ENCODE measurements at regions of chr21 and their contacts with region 1.

Region 1: GRCh38 chr21:42062236-42063022 is 8.7 kb upstream of the UMODL1 start:
- DNase-seq: peak; percentile 83 to 97 (median 90)
- ATAC-seq: peak; percentile 84
- H3K4me3 ChIP-seq: peak overlapping the region; percentile 79
- H3K4me3 Mint-ChIP-seq: peak overlapping the region; percentile 81
- H3K27ac ChIP-seq: peak overlapping the region; percentile 89 to 93
- H3K27ac Mint-ChIP-seq: peak overlapping the region; percentile 98
- H3K4me1 ChIP-seq: peaks cover 56% of the 10 kb centered on the region
- H3K4me1 Mint-ChIP-seq: peaks cover 63% of the 10 kb centered on the region
- H3K27me3 ChIP-seq: no peaks in the 10 kb centered on the region
- H3K27me3 Mint-ChIP-seq: no peaks in the 10 kb centered on the region
- CTCF ChIP-seq: no peak

Region 2: DNA sequence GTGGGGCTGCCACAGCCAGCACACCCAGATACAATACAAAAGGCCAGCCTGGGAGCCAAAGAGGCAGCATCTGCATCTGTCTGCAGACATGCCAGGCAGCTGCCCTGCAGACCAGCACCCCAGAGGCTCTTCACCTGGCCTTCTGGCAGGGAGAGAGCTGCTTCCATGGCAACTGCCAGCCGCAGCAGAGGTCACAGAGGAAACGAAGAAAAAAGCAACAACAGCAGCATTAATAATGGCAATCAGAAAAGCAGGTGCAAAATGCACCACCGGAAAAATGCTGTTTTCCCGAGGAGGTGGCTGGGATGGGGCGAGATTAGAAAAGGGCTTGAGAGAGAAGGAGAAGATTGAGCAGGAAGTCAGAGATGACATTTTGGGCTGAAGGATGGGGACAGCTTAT is 1885.7 kb before region 1 on chr21:
- CTCF ChIA-PET with region 1: no interaction called
- POLR2A ChIA-PET with region 1: no interaction called
- intact Hi-C with region 1: no loop called
- DNase-seq: no peak
- ATAC-seq: no peak
- H3K4me3 ChIP-seq: no peak overlapping the region
- H3K4me3 Mint-ChIP-seq: no peak overlapping the region
- H3K27ac ChIP-seq: no peak overlapping the region
- H3K27ac Mint-ChIP-seq: no peak overlapping the region
- H3K4me1 ChIP-seq: no peaks in the 10 kb centered on the region
- H3K4me1 Mint-ChIP-seq: no peaks in the 10 kb centered on the region
- H3K27me3 ChIP-seq: no peaks in the 10 kb centered on the region
- H3K27me3 Mint-ChIP-seq: peaks cover 6% of the 10 kb centered on the region
- CTCF ChIP-seq: no peak

Region 3: GRCh38 chr21:41267346-41267745 is 795.1 kb before region 1 on chr21:
- CTCF ChIA-PET with region 1: no interaction called
- POLR2A ChIA-PET with region 1: no interaction called
- intact Hi-C with region 1: no loop called
- DNase-seq: no peak
- ATAC-seq: no peak
- H3K4me3 ChIP-seq: no peak overlapping the region
- H3K4me3 Mint-ChIP-seq: no peak overlapping the region
- H3K27ac ChIP-seq: no peak overlapping the region
- H3K27ac Mint-ChIP-seq: no peak overlapping the region
- H3K4me1 ChIP-seq: no peaks in the 10 kb centered on the region
- H3K4me1 Mint-ChIP-seq: no peaks in the 10 kb centered on the region
- H3K27me3 ChIP-seq: no peaks in the 10 kb centered on the region
- H3K27me3 Mint-ChIP-seq: peaks cover 26% of the 10 kb centered on the region
- CTCF ChIP-seq: no peak

Region 4: DNA sequence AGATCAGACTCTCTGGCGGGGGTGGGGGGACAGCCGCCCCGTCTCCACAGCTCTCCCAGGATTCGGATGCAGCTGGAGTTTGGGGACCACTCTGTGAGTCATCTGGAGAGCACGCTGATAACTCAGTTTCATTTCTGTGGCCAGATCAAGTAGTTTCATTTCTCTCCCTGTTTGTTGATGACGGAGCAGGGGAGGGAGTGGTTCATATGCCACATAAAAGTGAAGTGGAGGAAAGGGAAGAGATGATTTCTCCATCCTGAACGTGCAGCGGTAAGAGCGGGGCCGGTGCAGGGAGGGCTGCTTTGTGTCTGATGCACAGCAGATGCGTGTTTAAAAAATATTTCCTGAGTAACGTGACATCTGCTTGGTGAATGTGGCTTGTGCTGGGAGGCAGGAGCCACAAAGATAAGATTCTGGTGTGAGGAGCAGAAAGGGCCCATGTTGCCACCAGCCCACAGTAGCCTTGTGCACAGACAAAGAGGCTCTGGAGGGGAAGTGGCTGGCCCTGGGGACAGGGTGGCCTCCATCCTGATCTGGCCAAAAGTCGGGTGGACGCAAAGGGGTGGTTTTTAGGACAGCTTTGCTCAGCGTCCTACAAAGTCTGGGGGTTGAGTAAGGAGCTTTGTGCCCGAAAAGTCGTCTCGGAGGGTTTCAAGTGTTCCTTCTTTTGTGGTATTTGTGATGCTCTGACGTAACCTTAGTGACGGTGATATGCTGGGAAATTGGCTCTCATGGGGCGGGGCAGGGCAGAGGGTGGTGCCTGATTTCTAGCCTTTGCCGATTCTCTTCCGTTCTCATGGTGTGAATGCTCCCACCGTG is 700.4 kb before region 1 on chr21 and contains the start of gene MX2:
- CTCF ChIA-PET with region 1: no interaction called
- POLR2A ChIA-PET with region 1: no interaction called
- intact Hi-C with region 1: loop called in 1 of 2 experiments (anchors 5 kb)
- DNase-seq: peak; percentile 67 to 96 (median 81)
- ATAC-seq: peak; percentile 79
- H3K4me3 ChIP-seq: peak within 1 kb of the TSS; percentile 89
- H3K4me3 Mint-ChIP-seq: peak within 1 kb of the TSS; percentile 93
- H3K27ac ChIP-seq: peak within 1 kb of the TSS; percentile 95 to 98
- H3K27ac Mint-ChIP-seq: peak within 1 kb of the TSS; percentile 98
- H3K4me1 ChIP-seq: peaks cover 50% of the 10 kb centered on the region
- H3K4me1 Mint-ChIP-seq: peaks cover 61% of the 10 kb centered on the region
- H3K27me3 ChIP-seq: no peaks in the 10 kb centered on the region
- H3K27me3 Mint-ChIP-seq: no peaks in the 10 kb centered on the region
- CTCF ChIP-seq: no peak
- total RNA-seq, gene MX2: 77.8 to 87.1 TPM

Region 5: GRCh38 chr21:41926117-41926806 is 136.2 kb before region 1 on chr21:
- CTCF ChIA-PET with region 1: no interaction called
- POLR2A ChIA-PET with region 1: interaction called, 19 read pairs
- intact Hi-C with region 1: loop called (anchors 1 to 2 kb)
- DNase-seq: peak in 11 of 14 experiments; percentile 1 to 80 (median 22)
- ATAC-seq: peak; percentile 92
- H3K4me3 ChIP-seq: peak overlapping the region; percentile 67
- H3K4me3 Mint-ChIP-seq: peak overlapping the region; percentile 90
- H3K27ac ChIP-seq: peak overlapping the region; percentile 75 to 83
- H3K27ac Mint-ChIP-seq: peak overlapping the region; percentile 95
- H3K4me1 ChIP-seq: peaks cover 52% of the 10 kb centered on the region
- H3K4me1 Mint-ChIP-seq: peaks cover 55% of the 10 kb centered on the region
- H3K27me3 ChIP-seq: no peaks in the 10 kb centered on the region
- H3K27me3 Mint-ChIP-seq: no peaks in the 10 kb centered on the region
- CTCF ChIP-seq: no peak

Region 6: DNA sequence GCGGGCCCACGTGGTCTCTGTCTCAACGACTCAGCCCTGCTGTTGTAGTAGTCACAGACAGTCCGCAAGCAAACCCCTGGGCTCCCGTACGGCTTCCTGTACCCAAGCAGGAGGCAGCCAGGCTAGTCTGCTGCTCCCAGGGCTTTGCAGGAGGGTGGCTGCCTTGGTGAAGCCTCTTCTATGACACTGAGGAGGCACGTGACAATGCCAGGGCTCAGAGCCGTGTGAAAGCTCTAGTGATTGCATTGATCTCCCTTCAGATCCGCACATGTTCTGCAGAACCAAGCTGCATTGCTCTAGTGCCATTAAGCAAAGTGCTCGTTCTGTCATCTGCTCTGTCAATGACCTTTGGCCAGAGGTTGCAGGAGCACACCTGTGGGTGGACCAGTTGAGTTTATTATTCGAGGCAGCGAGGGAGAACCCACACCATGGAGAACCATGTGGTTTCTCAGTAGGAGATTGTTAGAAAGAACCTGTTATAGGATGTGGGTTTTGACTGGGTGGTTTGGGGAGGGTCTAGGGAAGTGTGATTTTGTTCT is 26.7 kb after region 1 on chr21:
- CTCF ChIA-PET with region 1: no interaction called
- POLR2A ChIA-PET with region 1: interaction called, 5 read pairs
- intact Hi-C with region 1: loop called in 1 of 2 experiments (anchors 1 kb)
- DNase-seq: peak in 6 of 14 experiments; percentile 6 to 60 (median 28)
- ATAC-seq: peak; percentile 91
- H3K4me3 ChIP-seq: no peak overlapping the region
- H3K4me3 Mint-ChIP-seq: peak overlapping the region; percentile 70
- H3K27ac ChIP-seq: no peak overlapping the region
- H3K27ac Mint-ChIP-seq: peak overlapping the region; percentile 81
- H3K4me1 ChIP-seq: peaks cover 12% of the 10 kb centered on the region
- H3K4me1 Mint-ChIP-seq: peaks cover 28% of the 10 kb centered on the region
- H3K27me3 ChIP-seq: no peaks in the 10 kb centered on the region
- H3K27me3 Mint-ChIP-seq: no peaks in the 10 kb centered on the region
- CTCF ChIP-seq: no peak

Region 7: GRCh38 chr21:42125571-42126544 is 63.4 kb after region 1 on chr21:
- CTCF ChIA-PET with region 1: no interaction called
- POLR2A ChIA-PET with region 1: no interaction called
- intact Hi-C with region 1: no loop called
- DNase-seq: no peak
- ATAC-seq: no peak
- H3K4me3 ChIP-seq: no peak overlapping the region
- H3K4me3 Mint-ChIP-seq: no peak overlapping the region
- H3K27ac ChIP-seq: no peak overlapping the region
- H3K27ac Mint-ChIP-seq: no peak overlapping the region
- H3K4me1 ChIP-seq: peaks cover 5% of the 10 kb centered on the region
- H3K4me1 Mint-ChIP-seq: peaks cover 6% of the 10 kb centered on the region
- H3K27me3 ChIP-seq: peaks cover 31 to 40% of the 10 kb centered on the region in 2 experiments
- H3K27me3 Mint-ChIP-seq: peaks cover 49% of the 10 kb centered on the region
- CTCF ChIP-seq: no peak

Region 8: GRCh38 chr21:42892931-42893755 is 830.7 kb after region 1 on chr21 and contains the start of gene NDUFV3:
- CTCF ChIA-PET with region 1: no interaction called
- POLR2A ChIA-PET with region 1: interaction called, 4 read pairs
- intact Hi-C with region 1: loop called in 1 of 2 experiments (anchors 5 kb)
- DNase-seq: peak; percentile 100
- ATAC-seq: peak; percentile 93
- H3K4me3 ChIP-seq: peak within 1 kb of the TSS; percentile 76
- H3K4me3 Mint-ChIP-seq: peak within 1 kb of the TSS; percentile 91
- H3K27ac ChIP-seq: peak within 1 kb of the TSS; percentile 86
- H3K27ac Mint-ChIP-seq: peak within 1 kb of the TSS; percentile 97
- H3K4me1 ChIP-seq: peaks cover 12% of the 10 kb centered on the region
- H3K4me1 Mint-ChIP-seq: peaks cover 19% of the 10 kb centered on the region
- H3K27me3 ChIP-seq: no peaks in the 10 kb centered on the region
- H3K27me3 Mint-ChIP-seq: no peaks in the 10 kb centered on the region
- CTCF ChIP-seq: no peak
- total RNA-seq, gene NDUFV3: 15.3 to 15.8 TPM

Measured in CD4-positive, alpha-beta T cell (primary cell).